H1 (cell line): ENCODE measurements at regions of chr16 and their contacts with region 1.

Region 1: GRCh38 chr16:70289229-70290098 is at the start of gene AARS1:
- DNase-seq: peak; percentile 96 to 98
- H3K4me3 ChIP-seq: peak within 1 kb of the TSS; percentile 84 to 96 (median 92)
- H3K27ac ChIP-seq: peak within 1 kb of the TSS; percentile 97
- H3K4me1 ChIP-seq: peaks cover 0 to 3% (median 0%) of the 10 kb centered on the region in 4 experiments; a peak in 3 of 7 replicates
- H3K27me3 ChIP-seq: no peaks in the 10 kb centered on the region
- CTCF ChIP-seq: no peak
- EP300 ChIP-seq: peak in 1 of 2 experiments; percentile 43; a peak in 1 of 3 replicates
- POLR2A ChIP-seq: peak; percentile 97
- RAD21 ChIP-seq: no peak
- total RNA-seq, gene AARS1: 231 and 235 TPM in 2 replicates

Region 2: GRCh38 chr16:70306880-70307279 is 17.4 kb after region 1 on chr16:
- CTCF ChIA-PET with region 1: interaction called, 4 read pairs
- POLR2A ChIA-PET with region 1: interaction called, 11 read pairs
- DNase-seq: no peak
- H3K4me3 ChIP-seq: no peak overlapping the region
- H3K27ac ChIP-seq: no peak overlapping the region
- H3K4me1 ChIP-seq: no peaks in the 10 kb centered on the region
- H3K27me3 ChIP-seq: no peaks in the 10 kb centered on the region
- CTCF ChIP-seq: no peak
- EP300 ChIP-seq: no peak
- POLR2A ChIP-seq: no peak
- RAD21 ChIP-seq: no peak

Region 3: DNA sequence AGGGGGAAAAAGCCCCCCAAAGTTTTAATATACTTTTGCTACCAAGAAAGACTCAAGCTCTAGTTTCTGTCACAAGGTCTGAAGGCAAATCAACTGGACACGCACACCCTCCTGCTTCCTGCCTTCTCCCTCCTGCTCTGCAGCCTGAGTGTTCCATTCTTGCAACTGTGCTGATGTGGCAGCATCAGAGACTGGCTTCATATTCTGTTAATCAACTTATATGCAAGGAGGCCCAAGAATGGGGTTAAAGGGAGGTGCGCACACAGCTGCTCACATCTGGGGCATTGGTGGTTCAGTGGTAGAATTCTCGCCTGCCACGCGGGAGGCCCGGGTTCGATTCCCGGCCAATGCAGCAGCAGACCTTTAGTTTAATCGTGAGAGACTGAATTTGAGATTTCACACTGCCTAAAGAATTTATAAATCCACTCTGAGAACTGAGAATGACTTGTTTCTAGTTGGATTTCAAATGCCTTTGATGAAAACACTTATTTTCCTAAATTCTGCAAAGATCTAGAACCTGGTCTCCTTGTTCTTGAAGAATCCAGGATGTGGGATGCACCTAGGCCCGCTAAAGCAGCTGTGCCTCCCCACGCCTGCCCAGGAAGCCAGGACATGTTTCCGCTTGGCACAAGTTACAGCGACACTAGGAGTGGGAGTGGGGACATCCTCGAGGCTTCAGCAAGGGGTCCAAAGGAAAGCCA is 499.9 kb after region 1 on chr16:
- CTCF ChIA-PET with region 1: no interaction called
- POLR2A ChIA-PET with region 1: no interaction called
- DNase-seq: peak in 1 of 2 experiments; percentile 60
- H3K4me3 ChIP-seq: no peak overlapping the region
- H3K27ac ChIP-seq: peak overlapping the region; percentile 46; the same call in 1 of the 2 replicates
- H3K4me1 ChIP-seq: no peaks in the 10 kb centered on the region; a peak in 2 of 7 replicates
- H3K27me3 ChIP-seq: no peaks in the 10 kb centered on the region
- CTCF ChIP-seq: no peak
- EP300 ChIP-seq: no peak
- POLR2A ChIP-seq: no peak
- RAD21 ChIP-seq: no peak